Upper lobe of right lung (tissue), 1 donor: ENCODE measurements at regions of chr11 and their contacts with region 1.

Region 1: GRCh38 chr11:24661331-24661730 is 164.5 kb downstream of the LUZP2 start:
- DNase-seq: no peak
- ATAC-seq: no peak
- H3K4me3 ChIP-seq: no peak overlapping the region
- H3K27ac ChIP-seq: no peak overlapping the region
- H3K4me1 ChIP-seq: no peaks in the 10 kb centered on the region
- H3K27me3 ChIP-seq: no peaks in the 10 kb centered on the region
- CTCF ChIP-seq: no peak

Region 2: GRCh38 chr11:23211221-23211620 is 1450.1 kb before region 1 on chr11:
- intact Hi-C with region 1: loop called (anchors 10 kb)
- DNase-seq: no peak
- ATAC-seq: no peak
- H3K4me3 ChIP-seq: no peak overlapping the region
- H3K27ac ChIP-seq: no peak overlapping the region
- H3K4me1 ChIP-seq: no peaks in the 10 kb centered on the region
- H3K27me3 ChIP-seq: no peaks in the 10 kb centered on the region
- CTCF ChIP-seq: no peak

Region 3: GRCh38 chr11:24738972-24739371 is 77.6 kb after region 1 on chr11:
- intact Hi-C with region 1: no loop called
- DNase-seq: no peak
- ATAC-seq: no peak
- H3K4me3 ChIP-seq: no peak overlapping the region
- H3K27ac ChIP-seq: no peak overlapping the region
- H3K4me1 ChIP-seq: no peaks in the 10 kb centered on the region
- H3K27me3 ChIP-seq: no peaks in the 10 kb centered on the region
- CTCF ChIP-seq: no peak